ENCODE measurements at regions of chr12 and their contacts with region 1.

Region 1: GRCh38 chr12:113075137-113075683 is 18.7 kb downstream of the DTX1 start:
- DNase-seq: peak; percentile 95
- ATAC-seq: peak; percentile 94
- H3K4me3 ChIP-seq: peak overlapping the region; percentile 43; the same call in 1 of the 2 replicates
- H3K27ac ChIP-seq: peak overlapping the region; percentile 71
- H3K4me1 ChIP-seq: peaks cover 53% of the 10 kb centered on the region
- H3K27me3 ChIP-seq: no peaks in the 10 kb centered on the region
- CTCF ChIP-seq: no peak
- EP300 ChIP-seq: peak; percentile 63 to 82; a peak in 2 of 4 replicates
- POLR2A ChIP-seq: peak; percentile 30; the same call in 1 of the 2 replicates
- RAD21 ChIP-seq: 0 out of 2 replicates have a peak, but pooled peaks have one; percentile 8

Region 2: GRCh38 chr12:112937741-112938719 is 137.2 kb before region 1 on chr12 and contains the start of gene OAS3:
- CTCF ChIA-PET with region 1: no interaction called
- POLR2A ChIA-PET with region 1: no interaction called
- RAD21 ChIA-PET with region 1: no interaction called
- SMC1A ChIA-PET with region 1: no interaction called
- in situ Hi-C with region 1: no loop called
- intact Hi-C with region 1: no loop called
- DNase-seq: peak; percentile 45
- ATAC-seq: peak; percentile 81
- H3K4me3 ChIP-seq: peak within 1 kb of the TSS; percentile 70
- H3K27ac ChIP-seq: peak within 1 kb of the TSS; percentile 67
- H3K4me1 ChIP-seq: peaks cover 8% of the 10 kb centered on the region
- H3K27me3 ChIP-seq: no peaks in the 10 kb centered on the region
- CTCF ChIP-seq: 0 out of 6 replicates have a peak, but pooled peaks of 1 of the 3 experiments have one; percentile 3
- EP300 ChIP-seq: no peak
- POLR2A ChIP-seq: peak; percentile 49; the same call in 1 of the 2 replicates
- RAD21 ChIP-seq: no peak
- polyA plus RNA-seq, gene OAS3: 5.1 to 5.9 TPM

Region 3: GRCh38 chr12:113040722-113041171 is 34.5 kb before region 1 on chr12:
- CTCF ChIA-PET with region 1: no interaction called
- POLR2A ChIA-PET with region 1: no interaction called
- RAD21 ChIA-PET with region 1: no interaction called
- SMC1A ChIA-PET with region 1: no interaction called
- in situ Hi-C with region 1: no loop called
- intact Hi-C with region 1: no loop called
- DNase-seq: no peak
- ATAC-seq: no peak
- H3K4me3 ChIP-seq: no peak overlapping the region
- H3K27ac ChIP-seq: no peak overlapping the region
- H3K4me1 ChIP-seq: no peaks in the 10 kb centered on the region
- H3K27me3 ChIP-seq: no peaks in the 10 kb centered on the region
- CTCF ChIP-seq: no peak
- EP300 ChIP-seq: no peak
- POLR2A ChIP-seq: no peak
- RAD21 ChIP-seq: no peak

Region 4: DNA sequence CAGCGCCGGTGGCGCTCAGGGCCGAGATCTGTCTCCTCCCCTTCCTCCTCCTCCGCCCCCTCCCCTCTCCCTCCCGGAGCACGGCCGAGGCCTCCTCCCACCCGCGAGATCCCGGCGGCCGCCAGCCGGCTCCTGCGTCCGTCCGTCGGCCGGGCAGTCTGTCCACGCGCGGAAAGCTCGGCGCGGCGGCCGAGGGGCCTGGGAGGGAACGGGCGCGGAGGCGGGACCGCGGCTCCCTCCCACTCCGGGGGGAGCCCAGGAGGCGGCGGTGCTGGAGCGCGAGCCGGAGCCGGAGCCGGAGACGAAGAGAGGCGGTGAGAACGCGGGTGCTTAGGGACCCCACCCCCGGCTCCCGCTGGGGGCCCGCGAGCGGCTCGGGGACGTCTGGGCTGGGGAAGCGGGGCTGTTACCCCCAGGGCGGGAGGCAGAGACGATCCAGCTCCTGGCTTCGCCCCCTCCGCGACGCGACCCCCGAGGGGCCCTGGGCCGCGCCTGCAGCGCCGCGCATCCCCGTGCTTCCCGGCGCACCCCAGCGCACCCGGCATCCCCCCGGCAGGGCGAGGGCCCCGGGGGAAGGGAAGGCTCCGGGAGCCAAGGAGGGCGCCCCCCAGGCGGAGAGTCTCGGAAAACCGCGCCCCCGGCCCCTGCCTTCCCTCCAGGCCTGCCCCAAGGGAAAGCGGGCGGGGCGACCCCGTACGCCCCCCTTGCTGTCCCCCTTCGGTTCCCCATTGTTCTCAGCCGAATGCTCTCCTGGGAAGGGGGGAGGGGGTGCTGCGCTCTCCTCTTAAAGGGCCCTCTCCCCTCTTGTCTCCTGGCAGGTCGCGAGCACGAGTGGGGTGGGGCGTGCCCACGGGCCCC is 18.4 kb before region 1 on chr12 and contains the start of gene DTX1:
- CTCF ChIA-PET with region 1: interaction called, 18 read pairs
- POLR2A ChIA-PET with region 1: interaction called, 46 read pairs
- RAD21 ChIA-PET with region 1: interaction called, 84 read pairs
- SMC1A ChIA-PET with region 1: interaction called, 83 read pairs
- in situ Hi-C with region 1: no loop called
- intact Hi-C with region 1: no loop called
- DNase-seq: no peak
- ATAC-seq: peak; percentile 57
- H3K4me3 ChIP-seq: peak within 1 kb of the TSS; percentile 62
- H3K27ac ChIP-seq: no peak within 1 kb of the TSS
- H3K4me1 ChIP-seq: peaks cover 7% of the 10 kb centered on the region
- H3K27me3 ChIP-seq: peaks cover 1 to 9% of the 10 kb centered on the region in 2 experiments; a peak in 3 of 4 replicates
- CTCF ChIP-seq: peak in 2 of 3 experiments; percentile 7 to 19; a peak in 2 of 6 replicates
- EP300 ChIP-seq: no peak
- POLR2A ChIP-seq: no peak
- RAD21 ChIP-seq: no peak
- polyA plus RNA-seq, gene DTX1: 0.13 to 0.32 TPM

Region 5: DNA sequence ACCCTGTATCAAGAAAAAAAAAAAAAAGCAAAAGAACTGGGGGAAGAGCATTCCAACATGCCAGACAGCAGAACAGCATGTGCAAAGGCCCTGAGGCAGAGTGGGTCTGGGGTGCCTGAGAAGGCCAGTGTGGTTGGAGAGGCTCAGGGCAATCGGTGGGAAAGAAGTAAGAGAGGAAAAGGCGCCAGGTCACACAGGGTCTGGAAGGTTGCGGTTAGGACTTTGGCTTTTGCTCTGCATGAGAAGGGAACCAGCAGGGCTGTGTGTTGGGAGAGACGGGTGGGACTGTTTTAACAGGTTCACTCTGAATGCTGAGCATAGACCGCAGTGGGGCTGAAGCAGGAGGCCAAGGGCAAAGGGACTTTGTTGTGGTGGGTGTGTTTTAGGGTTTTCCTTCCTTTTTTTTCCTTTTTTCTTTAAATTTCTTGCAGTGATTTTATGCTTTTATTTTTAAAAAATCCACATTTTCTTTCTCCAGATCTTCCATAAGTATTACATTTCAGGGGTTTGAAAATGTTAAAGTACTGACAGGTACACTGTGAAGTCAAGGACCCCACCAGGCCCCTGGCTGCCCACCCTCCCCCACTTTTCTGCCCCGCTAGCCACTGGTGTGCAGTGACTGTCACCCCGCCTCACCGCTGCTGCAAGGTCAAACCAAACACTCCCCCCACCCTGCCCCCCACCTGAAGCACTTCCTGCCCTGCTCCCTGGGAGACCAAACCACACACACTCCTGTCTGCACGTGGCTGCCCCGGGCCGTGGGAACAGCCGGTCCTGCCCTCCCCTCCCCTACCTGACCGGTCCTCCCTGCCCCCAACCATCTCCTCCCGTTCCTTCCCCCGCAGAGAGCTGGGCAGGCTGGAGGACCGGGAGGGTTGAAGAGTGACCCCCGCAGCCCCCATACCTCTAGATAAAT is 11.3 kb after region 1 on chr12:
- CTCF ChIA-PET with region 1: interaction called, 8 read pairs
- POLR2A ChIA-PET with region 1: interaction called, 41 read pairs
- RAD21 ChIA-PET with region 1: interaction called, 14 read pairs
- SMC1A ChIA-PET with region 1: interaction called, 23 read pairs
- in situ Hi-C with region 1: no loop called
- intact Hi-C with region 1: loop called (anchors 1 kb)
- DNase-seq: peak; percentile 62
- ATAC-seq: peak; percentile 55
- H3K4me3 ChIP-seq: peak overlapping the region; percentile 2; the same call in 1 of the 2 replicates
- H3K27ac ChIP-seq: peak overlapping the region; percentile 80
- H3K4me1 ChIP-seq: peaks cover 67% of the 10 kb centered on the region
- H3K27me3 ChIP-seq: no peaks in the 10 kb centered on the region
- CTCF ChIP-seq: no peak
- EP300 ChIP-seq: 0 out of 4 replicates have a peak, but pooled peaks of 1 of the 2 experiments have one; percentile 38
- POLR2A ChIP-seq: no peak
- RAD21 ChIP-seq: no peak

Region 6: DNA sequence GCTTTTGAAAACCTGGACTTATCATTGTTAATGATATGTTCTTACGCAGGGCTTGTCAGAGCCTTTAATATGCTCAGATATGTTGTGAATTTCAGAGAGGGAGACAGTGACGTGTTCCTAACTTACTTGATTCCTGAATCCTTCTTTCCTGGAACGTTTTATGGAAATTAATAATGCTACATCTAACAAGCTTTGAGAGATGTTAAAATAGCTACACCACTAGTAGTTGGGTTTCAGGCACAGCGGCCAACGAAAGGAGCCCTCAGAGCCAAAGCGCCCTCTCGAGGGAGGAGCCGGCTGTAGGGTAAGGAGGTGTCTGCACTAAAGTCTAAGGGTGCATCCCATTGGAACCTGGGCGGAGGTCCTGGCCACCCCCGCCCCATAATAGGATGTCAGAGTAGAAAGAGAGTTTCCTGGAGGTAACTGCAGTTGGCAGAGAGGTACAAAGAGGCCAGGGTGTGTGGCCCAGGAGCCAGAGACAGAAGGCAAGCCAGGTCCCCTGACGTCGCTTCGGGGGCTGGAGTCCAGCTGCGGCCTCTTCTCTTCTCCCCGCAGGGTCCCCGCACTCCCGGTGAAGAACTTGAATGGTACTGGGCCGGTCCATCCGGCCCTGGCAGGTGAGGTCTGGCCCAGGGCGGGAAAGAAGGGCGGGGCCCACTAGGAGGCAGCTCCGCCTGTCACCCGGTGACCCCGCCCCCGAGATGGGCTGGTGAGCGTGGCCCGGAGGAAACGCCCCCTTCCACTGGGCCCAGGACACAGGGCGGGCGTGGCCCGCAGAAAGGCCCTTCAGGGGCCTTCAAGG is 17.6 kb after region 1 on chr12:
- CTCF ChIA-PET with region 1: interaction called, 12 read pairs
- POLR2A ChIA-PET with region 1: interaction called, 41 read pairs
- RAD21 ChIA-PET with region 1: interaction called, 14 read pairs
- SMC1A ChIA-PET with region 1: interaction called, 23 read pairs
- in situ Hi-C with region 1: no loop called
- intact Hi-C with region 1: no loop called
- DNase-seq: no peak
- ATAC-seq: peak; percentile 50
- H3K4me3 ChIP-seq: no peak overlapping the region
- H3K27ac ChIP-seq: no peak overlapping the region
- H3K4me1 ChIP-seq: peaks cover 31% of the 10 kb centered on the region
- H3K27me3 ChIP-seq: no peaks in the 10 kb centered on the region
- CTCF ChIP-seq: peak; percentile 48 to 54 (median 53); a peak in 5 of 6 replicates
- EP300 ChIP-seq: no peak
- POLR2A ChIP-seq: no peak
- RAD21 ChIP-seq: peak; percentile 69

Measured in GM12878 (cell line).